Activated CD8-positive, alpha-beta T cell treated with anti-CD3 and anti-CD28 coated beads for 36 hours (primary cell): ENCODE measurements at regions of chr13 and their contacts with region 1.

Region 1: GRCh38 chr13:41132512-41133152 is at the start of gene KBTBD6:
- DNase-seq: peak; percentile 98
- ATAC-seq: peak; percentile 95
- H3K4me3 Mint-ChIP-seq: peak within 1 kb of the TSS; percentile 94
- H3K27ac Mint-ChIP-seq: peak within 1 kb of the TSS; percentile 94
- H3K4me1 Mint-ChIP-seq: peaks cover 47% of the 10 kb centered on the region
- H3K27me3 Mint-ChIP-seq: no peaks in the 10 kb centered on the region
- CTCF ChIP-seq: no peak
- total RNA-seq, gene KBTBD6: 3.9 to 4.5 TPM

Region 2: DNA sequence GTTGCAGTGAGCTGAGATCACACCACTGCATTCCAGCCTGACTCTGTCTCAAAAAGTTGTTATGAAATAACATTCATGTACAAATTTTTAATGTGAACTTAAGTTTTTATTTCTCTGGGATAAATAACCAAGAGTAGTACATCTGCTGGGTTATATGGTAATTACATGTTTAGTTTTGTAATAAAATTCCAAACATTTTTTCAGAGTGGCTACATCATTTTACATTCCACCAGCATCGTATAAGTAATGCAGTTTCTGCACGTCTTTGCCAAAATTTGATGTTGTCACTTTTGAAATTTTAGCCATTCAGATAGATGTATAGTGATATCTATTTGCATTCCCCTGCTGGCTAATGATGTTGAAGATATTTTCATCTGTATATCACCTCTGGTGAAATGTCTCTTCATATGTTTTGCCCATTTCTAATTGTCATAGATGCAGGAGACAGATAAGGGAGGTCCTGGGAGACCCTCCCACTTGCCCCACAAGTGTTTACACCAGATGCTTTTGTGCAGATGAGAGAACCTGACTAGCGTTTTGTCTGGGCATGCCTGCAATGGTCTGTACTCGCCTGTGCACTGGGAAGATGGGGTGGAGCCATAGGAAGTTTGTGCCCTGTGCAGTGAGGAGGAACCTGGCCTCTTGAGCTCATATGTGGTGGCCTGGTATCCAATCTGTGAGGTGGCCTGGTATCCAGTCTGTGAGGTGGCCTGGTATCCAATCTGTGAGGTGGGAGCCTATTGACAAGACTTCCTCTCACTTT is 12.7 kb after region 1 on chr13:
- CTCF ChIA-PET with region 1: no interaction called
- POLR2A ChIA-PET with region 1: no interaction called
- intact Hi-C with region 1: no loop called
- DNase-seq: no peak
- ATAC-seq: no peak
- H3K4me3 Mint-ChIP-seq: no peak overlapping the region
- H3K27ac Mint-ChIP-seq: no peak overlapping the region
- H3K4me1 Mint-ChIP-seq: no peaks in the 10 kb centered on the region
- H3K27me3 Mint-ChIP-seq: no peaks in the 10 kb centered on the region
- CTCF ChIP-seq: no peak

Region 3: GRCh38 chr13:41193919-41194824 is 61.5 kb after region 1 on chr13 and contains the start of gene KBTBD7:
- CTCF ChIA-PET with region 1: interaction called, 7 read pairs
- POLR2A ChIA-PET with region 1: interaction called, 8 read pairs
- intact Hi-C with region 1: loop called (anchors 1 kb)
- DNase-seq: peak; percentile 97
- ATAC-seq: peak; percentile 97
- H3K4me3 Mint-ChIP-seq: peak within 1 kb of the TSS; percentile 85
- H3K27ac Mint-ChIP-seq: peak within 1 kb of the TSS; percentile 98
- H3K4me1 Mint-ChIP-seq: peaks cover 35% of the 10 kb centered on the region
- H3K27me3 Mint-ChIP-seq: no peaks in the 10 kb centered on the region
- CTCF ChIP-seq: no peak
- total RNA-seq, gene KBTBD7: 2.3 to 2.5 TPM